ENCODE measurements at regions of chr1 and their contacts with region 1.

Region 1: DNA sequence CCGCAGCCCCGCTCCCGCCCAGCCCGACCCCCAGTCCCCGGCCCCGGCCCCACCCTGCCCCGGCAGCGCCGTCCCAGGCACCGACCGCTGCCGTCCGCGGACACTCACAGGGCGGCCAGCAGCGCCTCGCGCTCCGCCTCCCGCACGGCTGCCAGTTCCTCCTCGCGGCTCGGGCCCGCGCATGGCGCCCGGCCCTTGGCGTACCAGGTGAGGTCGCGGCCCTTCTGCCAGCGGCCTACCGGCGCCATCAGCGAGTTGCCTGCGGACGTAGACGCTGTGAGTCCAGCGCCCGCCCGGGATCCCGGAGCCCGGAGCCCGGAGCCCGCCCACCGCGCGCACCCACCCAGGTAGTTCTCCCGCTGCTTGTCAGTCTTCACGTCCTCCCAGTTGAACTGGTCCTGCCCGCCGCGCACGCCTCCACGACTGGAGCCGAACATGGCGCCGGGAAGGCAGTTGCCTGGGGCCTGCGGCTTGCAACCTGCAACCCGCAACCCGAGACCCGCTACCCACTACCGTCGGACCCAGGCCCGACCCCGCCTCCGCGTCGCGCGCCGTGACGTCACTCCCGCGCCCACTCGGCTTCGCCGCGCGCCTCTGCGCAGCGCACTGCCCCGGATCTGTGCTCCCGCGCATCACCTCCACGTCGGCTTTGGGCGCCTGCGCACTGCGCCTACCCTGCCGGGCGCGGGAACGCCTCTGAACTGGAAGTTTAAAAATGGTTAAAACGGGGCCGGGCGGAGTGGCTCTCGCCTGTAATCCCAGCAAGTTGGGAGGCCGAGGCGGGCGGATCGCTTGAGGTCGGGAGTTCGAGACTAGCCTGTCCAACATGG is at the start of gene C1orf35:
- DNase-seq: peak; percentile 87 to 96 (median 92)
- ATAC-seq: peak; percentile 78
- H3K4me3 ChIP-seq: peak within 1 kb of the TSS; percentile 83
- H3K4me3 Mint-ChIP-seq: peak within 1 kb of the TSS; percentile 96
- H3K27ac ChIP-seq: peak within 1 kb of the TSS; percentile 77 to 87
- H3K27ac Mint-ChIP-seq: peak within 1 kb of the TSS; percentile 97
- H3K4me1 ChIP-seq: peaks cover 37% of the 10 kb centered on the region
- H3K4me1 Mint-ChIP-seq: peaks cover 33% of the 10 kb centered on the region
- H3K27me3 ChIP-seq: no peaks in the 10 kb centered on the region
- H3K27me3 Mint-ChIP-seq: no peaks in the 10 kb centered on the region
- CTCF ChIP-seq: no peak
- total RNA-seq, gene C1orf35: 36.6 to 40.3 TPM

Region 2: DNA sequence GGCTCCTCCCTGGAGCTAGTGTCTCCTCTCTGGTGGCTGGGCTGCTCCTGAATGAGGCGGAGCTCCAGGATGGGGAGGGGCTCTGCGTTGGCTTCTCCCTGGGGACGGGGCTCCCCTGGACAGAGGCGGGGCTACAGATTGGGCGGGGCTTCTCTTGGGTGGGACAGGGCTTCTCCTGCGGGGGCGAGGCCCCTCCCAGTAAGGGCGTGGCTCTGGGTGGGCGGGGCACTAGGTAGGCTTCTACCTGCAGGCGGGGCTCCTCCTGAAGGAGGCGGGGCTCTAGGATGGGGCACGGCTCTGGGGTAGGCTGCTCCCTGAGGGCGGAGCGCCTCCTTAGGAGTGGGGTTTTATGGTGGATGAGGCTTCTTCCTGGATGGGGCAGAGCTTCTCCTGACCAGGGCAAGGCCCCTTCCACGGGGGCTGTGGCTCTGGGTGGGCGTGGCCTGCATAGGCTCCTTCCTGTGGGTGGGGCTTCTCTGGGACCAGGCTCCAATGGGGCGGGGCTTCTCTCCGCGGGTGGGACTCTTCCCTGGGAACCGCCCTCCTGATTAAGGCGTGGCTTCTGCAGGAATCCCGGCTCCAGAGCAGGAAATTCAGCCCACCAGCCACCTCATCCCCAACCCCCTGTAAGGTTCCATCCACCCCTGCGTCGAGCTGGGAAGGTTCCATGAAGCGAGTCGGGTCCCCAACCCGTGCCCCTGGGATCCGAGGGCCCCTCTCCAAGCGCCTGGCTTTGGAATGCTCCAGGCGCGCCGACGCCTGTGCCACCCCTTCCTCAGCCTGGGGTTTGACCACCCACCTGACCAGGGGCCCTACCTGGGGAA is 43.2 kb before region 1 on chr1:
- CTCF ChIA-PET with region 1: no interaction called
- POLR2A ChIA-PET with region 1: no interaction called
- intact Hi-C with region 1: loop called in 1 of 2 experiments (anchors 2 kb)
- DNase-seq: peak; percentile 30 to 83 (median 59)
- ATAC-seq: peak; percentile 48
- H3K4me3 ChIP-seq: peak overlapping the region; percentile 49
- H3K4me3 Mint-ChIP-seq: peak overlapping the region; percentile 74
- H3K27ac ChIP-seq: no peak overlapping the region
- H3K27ac Mint-ChIP-seq: peak overlapping the region; percentile 62
- H3K4me1 ChIP-seq: peaks cover 27% of the 10 kb centered on the region
- H3K4me1 Mint-ChIP-seq: peaks cover 6% of the 10 kb centered on the region
- H3K27me3 ChIP-seq: peaks cover 40 to 58% of the 10 kb centered on the region in 2 experiments
- H3K27me3 Mint-ChIP-seq: peaks cover 51% of the 10 kb centered on the region
- CTCF ChIP-seq: no peak

Measured in CD4-positive, alpha-beta T cell (primary cell).